Panc1 (cell line): ENCODE measurements at regions of chr6 and their contacts with region 1.

Region 1: GRCh38 chr6:47631269-47631772 is 67.1 kb upstream of the ADGRF4 start:
- DNase-seq: no peak
- ATAC-seq: peak; percentile 60
- H3K4me3 ChIP-seq: no peak overlapping the region
- H3K27ac ChIP-seq: no peak overlapping the region
- H3K4me1 ChIP-seq: no peaks in the 10 kb centered on the region
- H3K27me3 ChIP-seq: no peaks in the 10 kb centered on the region
- CTCF ChIP-seq: peak; percentile 78

Region 2: GRCh38 chr6:47492355-47492754 is 139.0 kb before region 1 on chr6:
- CTCF ChIA-PET with region 1: interaction called, 10 read pairs
- POLR2A ChIA-PET with region 1: no interaction called
- in situ Hi-C with region 1: no loop called
- intact Hi-C with region 1: no loop called
- DNase-seq: no peak
- ATAC-seq: no peak
- H3K4me3 ChIP-seq: no peak overlapping the region
- H3K27ac ChIP-seq: no peak overlapping the region
- H3K4me1 ChIP-seq: peaks cover 5% of the 10 kb centered on the region; the same call in 1 of the 2 replicates
- H3K27me3 ChIP-seq: no peaks in the 10 kb centered on the region
- CTCF ChIP-seq: no peak

Region 3: GRCh38 chr6:47733879-47734558 is 102.7 kb after region 1 on chr6:
- CTCF ChIA-PET with region 1: interaction called, 6 read pairs
- POLR2A ChIA-PET with region 1: no interaction called
- in situ Hi-C with region 1: no loop called
- intact Hi-C with region 1: loop called (anchors 2 kb)
- DNase-seq: no peak
- ATAC-seq: peak; percentile 65; the same call in 1 of the 2 replicates
- H3K4me3 ChIP-seq: no peak overlapping the region
- H3K27ac ChIP-seq: no peak overlapping the region
- H3K4me1 ChIP-seq: no peaks in the 10 kb centered on the region
- H3K27me3 ChIP-seq: no peaks in the 10 kb centered on the region
- CTCF ChIP-seq: peak; percentile 30; the same call in 1 of the 2 replicates

Region 4: GRCh38 chr6:47780510-47781356 is 149.4 kb after region 1 on chr6:
- CTCF ChIA-PET with region 1: interaction called, 19 read pairs
- POLR2A ChIA-PET with region 1: no interaction called
- in situ Hi-C with region 1: no loop called
- intact Hi-C with region 1: loop called (anchors 1 kb)
- DNase-seq: peak; percentile 76
- ATAC-seq: peak; percentile 93
- H3K4me3 ChIP-seq: no peak overlapping the region
- H3K27ac ChIP-seq: no peak overlapping the region
- H3K4me1 ChIP-seq: peaks cover 8% of the 10 kb centered on the region; the same call in 1 of the 2 replicates
- H3K27me3 ChIP-seq: peaks cover 3% of the 10 kb centered on the region
- CTCF ChIP-seq: peak; percentile 78